Adrenal gland (tissue), 19 donors: ENCODE measurements at regions of chr21 and their contacts with region 1.

Region 1: DNA sequence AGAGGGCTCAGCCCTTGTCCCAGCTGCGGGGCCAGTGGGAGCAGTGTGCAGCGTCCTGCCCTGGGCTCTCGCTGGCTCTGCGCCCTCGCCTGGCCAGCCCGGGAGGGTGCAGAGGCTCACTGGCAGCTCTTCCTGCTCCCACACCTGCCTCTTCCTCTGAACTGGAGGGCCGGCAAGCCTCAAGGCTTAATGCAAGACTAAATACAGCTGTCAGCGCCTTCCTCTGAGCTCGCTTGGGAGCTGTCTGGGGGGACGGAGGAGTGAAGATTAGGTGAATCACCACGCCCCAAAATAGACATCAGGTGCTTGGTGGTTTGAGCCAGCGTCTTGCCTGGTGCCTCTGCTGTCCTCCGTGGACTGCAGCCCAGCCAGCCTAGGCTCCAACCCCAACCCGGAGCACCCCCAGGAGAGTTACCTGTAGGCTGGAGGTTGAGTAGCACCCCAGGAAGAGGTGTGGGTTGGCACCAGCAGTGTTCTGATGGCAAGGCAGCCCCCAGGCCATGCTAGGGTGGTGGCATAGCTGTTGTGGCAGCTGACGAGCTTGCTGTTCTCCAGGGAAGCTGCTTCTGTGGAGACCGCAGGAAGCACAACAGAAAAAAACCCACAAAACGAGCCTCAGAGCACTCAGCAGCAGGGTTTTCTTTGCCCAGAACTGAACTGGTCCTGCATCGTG is 36.9 kb downstream of the UMODL1 start:
- DNase-seq: peak; percentile 61 to 85 (median 77)
- H3K4me3 ChIP-seq: no peak overlapping the region
- H3K27ac ChIP-seq: no peak overlapping the region
- H3K4me1 ChIP-seq: peaks cover 0 to 7% of the 10 kb centered on the region in 2 donors
- H3K27me3 ChIP-seq: no peaks in the 10 kb centered on the region
- CTCF ChIP-seq: peak; percentile 64 to 81 (median 76)
- POLR2A ChIP-seq: no peak

Region 2: GRCh38 chr21:42009831-42010523 is 98.0 kb before region 1 on chr21 and contains the start of gene ZBTB21:
- intact Hi-C with region 1: loop called in 1 of 2 experiments (anchors 5 kb)
- DNase-seq: peak; percentile 98 to 99 (median 99)
- H3K4me3 ChIP-seq: peak within 1 kb of the TSS; percentile 55 to 82 (median 66)
- H3K27ac ChIP-seq: peak within 1 kb of the TSS; percentile 93 to 100 (median 98)
- H3K4me1 ChIP-seq: peaks cover 0 to 13% of the 10 kb centered on the region in 2 donors
- H3K27me3 ChIP-seq: no peaks in the 10 kb centered on the region
- CTCF ChIP-seq: no peak
- POLR2A ChIP-seq: peak; percentile 93 to 99
- total RNA-seq, gene ZBTB21: 9.5 to 39.1 (median 14.6) TPM

Region 3: DNA sequence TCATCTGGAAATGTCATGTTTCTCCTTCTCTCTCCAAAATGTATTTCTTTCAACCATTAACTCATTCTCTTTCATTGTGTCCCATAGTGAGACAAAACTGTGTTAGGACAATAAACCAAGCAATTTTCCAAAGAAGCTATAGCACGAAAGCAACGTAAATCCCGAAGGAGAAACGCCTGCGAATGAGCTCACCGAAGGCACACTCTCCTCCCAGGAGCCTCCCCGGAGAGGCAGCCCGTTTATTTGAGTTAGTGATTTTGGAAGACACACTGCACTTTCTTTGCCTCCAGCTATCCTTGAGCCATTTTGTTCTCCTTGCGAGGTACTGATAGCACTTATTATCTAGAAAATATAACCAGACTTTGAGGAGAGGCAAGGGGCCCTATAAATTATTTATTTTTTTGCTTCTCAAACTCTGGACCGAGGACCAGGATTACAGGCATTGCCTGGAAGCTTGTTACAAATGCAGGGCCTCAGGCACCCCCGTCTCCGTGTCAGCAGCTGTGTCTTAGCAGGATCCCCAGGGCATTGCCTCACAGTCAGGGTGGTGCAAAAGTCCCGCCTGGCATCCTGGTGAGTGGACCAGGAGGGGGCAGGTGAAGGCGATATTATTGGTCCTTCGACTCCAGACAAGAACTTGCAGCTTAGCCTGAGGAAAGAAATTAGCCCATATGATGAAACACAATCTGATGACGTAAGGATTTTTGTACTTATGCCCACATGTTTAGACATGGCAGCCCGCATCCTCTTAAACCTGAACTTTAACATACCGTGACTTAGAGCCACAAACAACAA is 347.0 kb after region 1 on chr21:
- intact Hi-C with region 1: no loop called
- DNase-seq: no peak
- H3K4me3 ChIP-seq: no peak overlapping the region
- H3K27ac ChIP-seq: no peak overlapping the region
- H3K4me1 ChIP-seq: no peaks in the 10 kb centered on the region
- H3K27me3 ChIP-seq: no peaks in the 10 kb centered on the region
- CTCF ChIP-seq: no peak
- POLR2A ChIP-seq: no peak